ENCODE measurements at regions of chr1 and their contacts with region 1.

Region 1: GRCh38 chr1:156625436-156626078 is 6.3 kb downstream of the HAPLN2 start:
- DNase-seq: peak; percentile 54 to 84 (median 64)
- ATAC-seq: peak; percentile 78
- H3K4me3 ChIP-seq: peak overlapping the region; percentile 40
- H3K4me3 Mint-ChIP-seq: peak overlapping the region; percentile 86
- H3K27ac ChIP-seq: no peak overlapping the region
- H3K27ac Mint-ChIP-seq: no peak overlapping the region
- H3K4me1 ChIP-seq: peaks cover 25% of the 10 kb centered on the region
- H3K4me1 Mint-ChIP-seq: peaks cover 6% of the 10 kb centered on the region
- H3K27me3 ChIP-seq: peaks cover 46 to 51% of the 10 kb centered on the region in 2 experiments
- H3K27me3 Mint-ChIP-seq: peaks cover 74% of the 10 kb centered on the region
- CTCF ChIP-seq: peak; percentile 94

Region 2: DNA sequence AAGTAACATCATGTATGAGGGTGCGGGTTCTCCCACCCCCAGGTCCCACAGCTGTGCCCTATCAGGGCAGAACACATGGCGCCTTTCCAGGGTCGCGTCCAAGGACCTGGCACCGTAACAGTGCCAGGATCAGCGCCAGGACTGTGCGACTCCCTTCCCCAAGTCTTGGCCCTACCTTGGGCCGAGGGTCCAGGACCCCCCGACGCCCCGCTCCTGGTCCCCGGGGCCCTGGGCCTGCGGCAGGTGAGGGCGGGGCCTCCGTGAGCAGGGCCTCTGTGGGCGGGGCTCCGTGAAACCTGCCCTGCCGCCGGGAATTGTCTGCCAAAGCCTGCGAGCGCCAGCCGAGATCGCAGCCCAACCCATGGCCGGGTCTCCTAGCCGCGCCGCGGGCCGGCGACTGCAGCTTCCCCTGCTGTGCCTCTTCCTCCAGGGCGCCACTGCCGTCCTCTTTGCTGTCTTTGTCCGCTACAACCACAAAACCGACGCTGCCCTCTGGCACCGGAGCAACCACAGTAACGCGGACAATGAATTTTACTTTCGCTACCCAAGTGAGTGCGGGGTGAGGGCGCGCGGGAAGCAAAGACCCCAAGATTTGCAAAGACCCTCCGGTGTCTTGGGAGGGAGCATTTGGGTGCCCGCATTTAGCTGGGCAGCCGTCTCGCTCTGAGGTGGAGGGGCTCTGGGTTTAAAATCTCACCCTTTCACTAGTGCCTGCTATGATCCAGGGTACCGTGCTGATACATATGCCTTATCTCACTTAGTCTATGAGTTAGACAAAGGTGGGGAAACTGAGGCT is 256.5 kb before region 1 on chr1 and contains the start of gene RHBG:
- CTCF ChIA-PET with region 1: no interaction called
- POLR2A ChIA-PET with region 1: no interaction called
- intact Hi-C with region 1: no loop called
- DNase-seq: peak in 6 of 14 experiments; percentile 11 to 50 (median 32)
- ATAC-seq: peak; percentile 65
- H3K4me3 ChIP-seq: peak within 1 kb of the TSS; percentile 37
- H3K4me3 Mint-ChIP-seq: peak within 1 kb of the TSS; percentile 56
- H3K27ac ChIP-seq: no peak within 1 kb of the TSS
- H3K27ac Mint-ChIP-seq: no peak within 1 kb of the TSS
- H3K4me1 ChIP-seq: peaks cover 7% of the 10 kb centered on the region
- H3K4me1 Mint-ChIP-seq: no peaks in the 10 kb centered on the region
- H3K27me3 ChIP-seq: peaks cover 29 to 53% of the 10 kb centered on the region in 2 experiments
- H3K27me3 Mint-ChIP-seq: peaks cover 72% of the 10 kb centered on the region
- CTCF ChIP-seq: no peak
- total RNA-seq, gene RHBG: not detected

Region 3: DNA sequence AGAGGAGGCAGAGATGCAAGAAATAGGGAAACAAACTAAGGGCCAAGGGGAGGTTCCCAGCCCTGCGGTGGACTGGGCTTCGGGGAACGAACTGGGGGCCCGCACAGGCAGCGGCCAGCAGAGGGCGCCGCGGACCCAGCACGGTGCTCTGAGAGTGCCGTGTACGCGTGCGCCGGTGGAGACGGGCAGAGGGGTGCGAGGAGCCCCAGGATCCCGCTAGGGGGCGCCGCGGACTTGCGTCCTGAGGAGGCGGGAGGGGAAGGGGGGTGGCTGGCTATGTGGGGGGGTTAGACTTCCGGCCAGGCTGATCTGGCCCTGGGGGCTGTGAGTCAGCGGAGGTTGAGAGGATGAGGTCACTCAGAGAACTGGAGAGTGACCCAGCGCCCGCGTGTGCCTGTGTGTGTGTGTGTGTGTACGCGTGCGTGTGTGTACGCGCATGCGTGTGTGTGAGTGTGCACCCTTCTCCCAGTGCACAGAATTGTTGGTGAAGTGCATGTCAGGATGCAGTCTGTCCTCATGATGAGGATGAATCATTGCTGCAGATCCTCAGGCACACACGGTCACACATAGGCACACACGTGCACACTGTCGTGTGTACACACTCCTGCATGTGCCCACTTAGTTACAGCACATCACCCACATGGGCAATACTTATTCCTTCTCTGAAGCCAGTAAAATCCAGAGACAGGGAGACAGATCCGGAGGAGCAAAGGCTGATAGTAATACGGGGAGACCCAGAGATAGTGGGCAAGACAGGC is 34.6 kb after region 1 on chr1:
- CTCF ChIA-PET with region 1: interaction called, 12 read pairs
- POLR2A ChIA-PET with region 1: interaction called, 4 read pairs
- intact Hi-C with region 1: loop called (anchors 1 kb)
- DNase-seq: peak; percentile 79 to 96 (median 88)
- ATAC-seq: peak; percentile 87
- H3K4me3 ChIP-seq: no peak overlapping the region
- H3K4me3 Mint-ChIP-seq: peak overlapping the region; percentile 54
- H3K27ac ChIP-seq: no peak overlapping the region
- H3K27ac Mint-ChIP-seq: peak overlapping the region; percentile 42
- H3K4me1 ChIP-seq: peaks cover 60% of the 10 kb centered on the region
- H3K4me1 Mint-ChIP-seq: peaks cover 60% of the 10 kb centered on the region
- H3K27me3 ChIP-seq: peaks cover 20 to 22% of the 10 kb centered on the region in 2 experiments
- H3K27me3 Mint-ChIP-seq: peaks cover 30% of the 10 kb centered on the region
- CTCF ChIP-seq: peak; percentile 91

Region 4: DNA sequence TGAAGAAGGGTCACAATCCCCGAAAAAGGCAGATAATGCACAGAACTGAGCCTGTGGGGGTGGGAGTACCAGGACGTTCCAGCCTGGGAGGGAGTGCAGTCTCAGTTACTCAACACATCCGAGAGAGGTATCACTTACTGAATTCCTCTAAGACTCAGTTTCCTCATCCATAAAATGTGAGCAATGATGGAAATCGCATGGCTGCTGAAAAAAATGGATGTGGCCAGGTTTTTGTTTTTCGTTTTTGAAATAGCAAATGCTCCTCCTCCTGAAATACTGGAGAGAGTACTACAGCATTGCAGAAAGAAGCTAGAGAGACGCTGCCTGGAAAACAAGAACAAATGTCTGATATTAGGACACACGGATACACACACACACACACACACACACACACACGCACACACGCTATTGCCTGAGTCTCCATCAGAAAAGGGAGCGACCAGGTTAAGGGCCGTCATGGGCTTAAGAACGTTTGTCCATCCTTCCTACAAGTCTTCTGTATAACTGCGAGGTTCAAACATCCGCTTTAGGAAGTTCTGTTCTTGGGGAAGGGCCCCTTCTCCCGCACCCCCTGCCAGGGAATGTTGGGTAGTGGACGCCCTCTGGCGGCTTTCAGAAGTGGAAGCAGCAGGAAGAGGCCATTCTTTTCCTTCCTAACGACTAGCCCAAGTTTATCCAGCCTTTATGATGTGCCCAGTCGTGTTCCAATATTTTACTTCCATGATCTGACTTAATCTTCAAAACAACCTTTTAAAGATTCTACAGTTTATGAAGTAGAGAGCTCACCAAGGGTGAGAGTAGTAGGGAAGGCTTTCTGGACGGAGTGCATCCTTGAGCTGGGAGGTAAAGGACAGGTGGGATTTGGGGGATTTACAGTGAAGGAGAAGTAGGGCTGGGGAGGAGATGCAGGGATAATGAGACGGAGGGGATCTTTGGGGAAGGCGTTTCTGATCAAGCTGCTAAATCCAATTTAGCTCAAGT is 52.3 kb after region 1 on chr1:
- CTCF ChIA-PET with region 1: no interaction called
- POLR2A ChIA-PET with region 1: no interaction called
- intact Hi-C with region 1: loop called (anchors 1 to 5 kb)
- DNase-seq: peak in 4 of 14 experiments; percentile 42 to 66 (median 57)
- ATAC-seq: peak; percentile 26
- H3K4me3 ChIP-seq: no peak overlapping the region
- H3K4me3 Mint-ChIP-seq: no peak overlapping the region
- H3K27ac ChIP-seq: no peak overlapping the region
- H3K27ac Mint-ChIP-seq: no peak overlapping the region
- H3K4me1 ChIP-seq: peaks cover 14% of the 10 kb centered on the region
- H3K4me1 Mint-ChIP-seq: peaks cover 13% of the 10 kb centered on the region
- H3K27me3 ChIP-seq: peaks cover 63 to 72% of the 10 kb centered on the region in 2 experiments
- H3K27me3 Mint-ChIP-seq: peaks cover 82% of the 10 kb centered on the region
- CTCF ChIP-seq: peak; percentile 56

Region 5: GRCh38 chr1:156740679-156741612 is 115.4 kb after region 1 on chr1 and contains the start of gene MRPL24:
- CTCF ChIA-PET with region 1: no interaction called
- POLR2A ChIA-PET with region 1: no interaction called
- intact Hi-C with region 1: no loop called
- DNase-seq: peak; percentile 92 to 100 (median 96)
- ATAC-seq: peak; percentile 89
- H3K4me3 ChIP-seq: peak within 1 kb of the TSS; percentile 74
- H3K4me3 Mint-ChIP-seq: peak within 1 kb of the TSS; percentile 94
- H3K27ac ChIP-seq: peak within 1 kb of the TSS; percentile 82 to 86
- H3K27ac Mint-ChIP-seq: peak within 1 kb of the TSS; percentile 89
- H3K4me1 ChIP-seq: peaks cover 28% of the 10 kb centered on the region
- H3K4me1 Mint-ChIP-seq: peaks cover 40% of the 10 kb centered on the region
- H3K27me3 ChIP-seq: no peaks in the 10 kb centered on the region
- H3K27me3 Mint-ChIP-seq: no peaks in the 10 kb centered on the region
- CTCF ChIP-seq: no peak
- total RNA-seq, gene MRPL24: 11.7 to 11.9 TPM

Measured in CD4-positive, alpha-beta T cell (primary cell).